Caco-2 (cell line): ENCODE measurements at regions of chr15 and their contacts with region 1.

Region 1: GRCh38 chr15:100929641-100930042 is 10.5 kb downstream of the LRRK1 start:
- DNase-seq: peak in 1 of 2 experiments; percentile 51
- H3K4me3 ChIP-seq: no peak overlapping the region
- H3K4me3 Mint-ChIP-seq: peak overlapping the region; percentile 21
- H3K27ac Mint-ChIP-seq: peak overlapping the region; percentile 79
- H3K4me1 ChIP-seq: peaks cover 14% of the 10 kb centered on the region
- H3K4me1 Mint-ChIP-seq: peaks cover 21% of the 10 kb centered on the region
- H3K27me3 ChIP-seq: no peaks in the 10 kb centered on the region
- H3K27me3 Mint-ChIP-seq: no peaks in the 10 kb centered on the region
- CTCF ChIP-seq: no peak

Region 2: GRCh38 chr15:100944244-100944895 is 14.7 kb after region 1 on chr15:
- CTCF ChIA-PET with region 1: no interaction called
- POLR2A ChIA-PET with region 1: no interaction called
- intact Hi-C with region 1: loop called (anchors 2 kb)
- DNase-seq: no peak
- H3K4me3 ChIP-seq: no peak overlapping the region
- H3K4me3 Mint-ChIP-seq: no peak overlapping the region
- H3K27ac Mint-ChIP-seq: no peak overlapping the region
- H3K4me1 ChIP-seq: peaks cover 6% of the 10 kb centered on the region; the same call in 1 of the 2 replicates
- H3K4me1 Mint-ChIP-seq: peaks cover 16% of the 10 kb centered on the region
- H3K27me3 ChIP-seq: no peaks in the 10 kb centered on the region
- H3K27me3 Mint-ChIP-seq: no peaks in the 10 kb centered on the region
- CTCF ChIP-seq: no peak